Left ventricle myocardium inferior (tissue), 1 donor: ENCODE measurements at regions of chr12 and their contacts with region 1.

Region 1: GRCh38 chr12:132414634-132415326 is 75.2 kb upstream of the FBRSL1 start:
- DNase-seq: peak; percentile 74
- H3K4me3 ChIP-seq: no peak overlapping the region
- H3K27ac ChIP-seq: no peak overlapping the region
- H3K4me1 ChIP-seq: peaks cover 10% of the 10 kb centered on the region
- H3K27me3 ChIP-seq: peaks cover 73% of the 10 kb centered on the region
- CTCF ChIP-seq: peak; percentile 94

Region 2: GRCh38 chr12:132218915-132219314 is 195.9 kb before region 1 on chr12:
- intact Hi-C with region 1: no loop called
- DNase-seq: no peak
- H3K4me3 ChIP-seq: no peak overlapping the region
- H3K27ac ChIP-seq: no peak overlapping the region
- H3K4me1 ChIP-seq: no peaks in the 10 kb centered on the region
- H3K27me3 ChIP-seq: peaks cover 78% of the 10 kb centered on the region
- CTCF ChIP-seq: peak; percentile 48

Region 3: DNA sequence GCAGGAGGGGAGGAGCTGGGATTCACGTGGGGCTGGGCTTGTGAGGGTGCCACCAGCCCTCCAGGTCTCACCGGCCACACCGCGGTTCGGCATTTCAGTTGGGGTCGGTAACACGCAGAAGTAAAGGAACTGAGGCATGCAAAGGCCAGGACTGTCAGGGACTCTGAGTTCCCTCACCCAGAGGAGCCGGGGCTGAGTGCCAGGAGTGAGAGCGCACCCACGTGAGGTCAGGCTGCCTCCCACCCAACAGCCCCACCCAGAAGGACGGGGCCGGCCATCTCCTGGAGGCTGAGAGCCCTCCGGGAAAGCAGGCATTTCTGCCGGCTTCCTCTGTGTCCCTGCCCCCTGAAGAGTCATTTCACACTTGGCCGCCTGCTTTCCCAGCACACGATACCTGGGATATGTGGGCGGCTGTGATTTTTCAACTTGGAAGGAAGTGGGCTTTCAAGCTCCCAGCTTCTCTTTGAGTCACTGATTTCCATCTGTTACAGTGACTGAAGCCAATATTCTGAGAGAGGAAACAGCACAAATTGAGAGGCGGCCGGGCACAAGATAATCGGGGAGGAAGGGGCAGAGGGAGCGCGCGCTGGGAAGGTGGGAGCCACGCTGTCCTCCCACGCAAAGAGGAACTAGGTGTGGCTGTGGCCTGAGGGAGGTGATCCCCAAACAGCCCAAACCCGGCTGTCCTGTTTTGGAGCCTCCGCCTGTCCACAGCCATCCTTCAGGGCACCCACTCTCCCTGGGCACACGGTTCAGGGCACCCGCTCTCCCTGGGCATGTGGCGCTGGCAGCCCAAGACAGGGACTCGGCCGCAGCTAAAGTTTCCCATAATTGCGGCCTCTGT is 104.4 kb before region 1 on chr12:
- intact Hi-C with region 1: no loop called
- DNase-seq: no peak
- H3K4me3 ChIP-seq: no peak overlapping the region
- H3K27ac ChIP-seq: no peak overlapping the region
- H3K4me1 ChIP-seq: no peaks in the 10 kb centered on the region
- H3K27me3 ChIP-seq: peaks cover 49% of the 10 kb centered on the region
- CTCF ChIP-seq: no peak

Region 4: GRCh38 chr12:132470978-132471857 is 56.4 kb after region 1 on chr12:
- intact Hi-C with region 1: no loop called
- DNase-seq: no peak
- H3K4me3 ChIP-seq: no peak overlapping the region
- H3K27ac ChIP-seq: peak overlapping the region; percentile 33
- H3K4me1 ChIP-seq: peaks cover 4% of the 10 kb centered on the region
- H3K27me3 ChIP-seq: peaks cover 27% of the 10 kb centered on the region
- CTCF ChIP-seq: no peak

Region 5: GRCh38 chr12:132506328-132507160 is 91.8 kb after region 1 on chr12:
- intact Hi-C with region 1: no loop called
- DNase-seq: peak; percentile 90
- H3K4me3 ChIP-seq: peak overlapping the region; percentile 55
- H3K27ac ChIP-seq: peak overlapping the region; percentile 91
- H3K4me1 ChIP-seq: peaks cover 79% of the 10 kb centered on the region
- H3K27me3 ChIP-seq: no peaks in the 10 kb centered on the region
- CTCF ChIP-seq: no peak

Region 6: GRCh38 chr12:132523576-132524331 is 109.0 kb after region 1 on chr12:
- intact Hi-C with region 1: loop called (anchors 10 kb)
- DNase-seq: peak; percentile 68
- H3K4me3 ChIP-seq: no peak overlapping the region
- H3K27ac ChIP-seq: no peak overlapping the region
- H3K4me1 ChIP-seq: peaks cover 46% of the 10 kb centered on the region
- H3K27me3 ChIP-seq: no peaks in the 10 kb centered on the region
- CTCF ChIP-seq: peak; percentile 86

Region 7: GRCh38 chr12:132614861-132615578 is 200.2 kb after region 1 on chr12:
- intact Hi-C with region 1: loop called (anchors 10 kb)
- DNase-seq: peak; percentile 82
- H3K4me3 ChIP-seq: no peak overlapping the region
- H3K27ac ChIP-seq: no peak overlapping the region
- H3K4me1 ChIP-seq: peaks cover 20% of the 10 kb centered on the region
- H3K27me3 ChIP-seq: peaks cover 89% of the 10 kb centered on the region
- CTCF ChIP-seq: peak; percentile 91